ENCODE measurements at regions of chr20 and their contacts with region 1.

Region 1: GRCh38 chr20:18507218-18508021 is at the start of gene SEC23B:
- DNase-seq: peak; percentile 99
- H3K4me3 Mint-ChIP-seq: peak within 1 kb of the TSS; percentile 99
- H3K27ac Mint-ChIP-seq: peak within 1 kb of the TSS; percentile 99
- H3K4me1 Mint-ChIP-seq: peaks cover 33% of the 10 kb centered on the region
- H3K27me3 Mint-ChIP-seq: peaks cover 3% of the 10 kb centered on the region
- total RNA-seq, gene SEC23B: 108 TPM in 2 replicates

Region 2: DNA sequence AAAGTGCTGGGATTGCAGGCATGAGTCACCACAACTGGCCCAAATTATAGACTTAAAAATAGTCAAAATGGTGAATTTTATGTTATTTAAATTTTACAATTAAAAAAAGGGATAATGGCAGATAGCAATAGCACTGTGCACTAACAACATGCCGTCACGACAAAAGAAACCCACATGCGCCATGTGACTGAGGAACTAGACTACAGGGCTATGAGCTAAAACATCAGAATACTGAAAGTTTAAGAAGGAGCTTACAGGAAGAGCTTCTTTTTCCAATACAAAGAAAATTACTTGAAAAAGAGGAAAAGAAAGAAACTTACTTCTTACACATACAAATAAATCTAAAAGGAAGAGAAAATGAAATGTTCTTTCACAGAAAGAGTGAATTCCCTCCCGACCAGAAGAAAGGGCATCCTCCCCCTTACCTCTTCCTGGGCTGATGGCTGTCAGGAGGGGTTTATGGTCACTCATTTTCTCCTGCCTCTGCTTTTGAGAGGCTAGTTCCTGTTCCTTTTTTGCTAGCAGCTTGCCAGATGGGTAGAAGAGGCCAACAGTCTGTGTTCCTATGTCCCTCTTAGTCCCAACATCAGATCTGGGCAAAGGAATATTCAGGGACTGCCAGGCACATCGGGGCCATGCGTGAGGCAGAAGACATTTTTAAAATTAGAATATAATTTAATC is 95.1 kb before region 1 on chr20:
- intact Hi-C with region 1: loop called (anchors 2 kb)
- DNase-seq: no peak
- H3K4me3 Mint-ChIP-seq: no peak overlapping the region
- H3K27ac Mint-ChIP-seq: no peak overlapping the region
- H3K4me1 Mint-ChIP-seq: peaks cover 5% of the 10 kb centered on the region
- H3K27me3 Mint-ChIP-seq: no peaks in the 10 kb centered on the region

Region 3: DNA sequence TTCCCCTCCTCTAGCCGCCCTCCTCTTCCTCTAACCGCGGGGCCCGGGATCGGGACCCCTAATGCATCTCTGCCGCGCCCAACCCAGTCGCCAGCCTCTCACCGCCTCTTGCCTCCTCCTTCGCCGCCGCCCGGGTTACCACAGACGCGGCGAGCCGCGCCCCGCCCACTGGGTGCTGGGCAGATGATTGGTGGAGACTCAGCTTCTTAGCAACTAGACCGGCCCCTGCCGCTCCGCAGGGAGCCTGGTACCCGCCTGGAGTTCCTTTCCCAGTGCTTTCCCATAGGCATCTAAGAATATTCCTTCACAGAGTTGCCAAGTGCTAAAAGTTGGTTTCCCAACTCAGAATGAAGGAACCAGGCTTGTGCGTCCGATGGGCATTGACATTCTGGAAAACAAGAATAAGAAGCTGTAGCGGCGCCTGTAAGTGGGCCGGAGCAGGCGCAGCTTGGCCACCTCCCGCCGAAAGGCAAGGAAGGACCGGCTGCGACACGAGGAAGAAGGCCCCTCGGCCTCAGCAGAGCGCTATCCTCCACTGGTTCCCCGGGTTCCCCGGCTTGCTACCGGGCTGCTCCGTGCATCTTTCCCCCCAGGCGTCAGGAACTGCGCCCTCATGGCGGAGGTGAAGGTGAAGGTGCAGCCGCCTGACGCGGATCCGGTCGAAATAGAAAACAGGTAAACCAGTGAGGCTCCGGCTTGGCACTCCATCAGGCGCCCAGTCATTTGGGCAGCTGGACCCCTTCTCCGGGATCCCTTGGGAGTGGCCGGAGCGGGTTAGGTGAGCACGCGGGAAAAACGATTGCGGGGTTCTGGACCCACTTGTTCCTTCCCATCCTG is 40.3 kb before region 1 on chr20 and contains the starts of genes DZANK1 and POLR3F:
- intact Hi-C with region 1: loop called (anchors 1 kb)
- DNase-seq: peak; percentile 98
- H3K4me3 Mint-ChIP-seq: peak within 1 kb of the TSS; percentile 92
- H3K27ac Mint-ChIP-seq: peak within 1 kb of the TSS; percentile 89
- H3K4me1 Mint-ChIP-seq: peaks cover 20% of the 10 kb centered on the region
- H3K27me3 Mint-ChIP-seq: no peaks in the 10 kb centered on the region
- total RNA-seq, gene DZANK1: 1.8 and 1.9 TPM in 2 replicates
- total RNA-seq, gene POLR3F: 15.0 and 15.3 TPM in 2 replicates

Region 4: DNA sequence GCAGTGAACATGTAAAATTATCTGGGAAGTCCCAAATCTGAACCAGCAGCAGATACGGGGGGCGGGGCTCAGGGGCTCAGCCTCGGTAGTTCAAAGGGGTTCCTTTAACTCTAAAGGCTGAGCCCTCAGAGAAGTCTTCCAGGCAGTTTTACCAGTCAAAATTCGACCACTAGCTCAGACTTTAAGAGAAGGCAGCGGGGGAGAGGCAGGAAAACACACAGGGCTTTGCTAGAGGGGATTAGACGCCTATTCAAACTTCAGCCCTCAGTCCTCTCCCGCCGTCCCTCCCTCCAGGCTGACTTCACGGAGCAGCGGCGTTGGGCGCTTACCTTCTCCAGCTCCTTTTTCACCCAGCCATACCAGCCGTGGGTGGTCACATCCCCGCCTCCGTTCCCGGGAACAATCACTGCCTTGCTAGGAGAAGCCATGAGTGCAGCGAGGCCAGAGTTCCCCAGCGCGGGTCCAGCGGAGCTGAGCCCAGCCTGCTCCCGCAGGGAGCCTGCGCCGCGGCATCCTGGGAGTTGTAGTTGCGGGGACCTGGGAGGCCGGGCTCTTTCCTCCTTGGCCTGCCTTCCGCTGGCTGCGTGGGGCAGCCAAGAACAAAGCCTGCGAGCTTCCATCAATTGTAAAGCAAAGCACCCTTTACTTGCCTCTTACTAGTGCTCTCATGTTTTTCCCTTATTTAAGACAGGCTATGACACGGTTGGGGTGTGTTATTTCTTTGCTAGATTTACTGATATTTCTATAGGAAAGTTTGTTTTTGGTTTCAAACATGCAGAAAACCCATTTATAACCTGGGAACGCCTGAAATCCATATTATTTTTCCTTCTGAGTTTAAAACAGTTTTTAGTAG is 10.5 kb before region 1 on chr20 and contains the start of gene RBBP9:
- intact Hi-C with region 1: loop called (anchors 1 kb)
- DNase-seq: peak; percentile 93
- H3K4me3 Mint-ChIP-seq: peak within 1 kb of the TSS; percentile 99
- H3K27ac Mint-ChIP-seq: peak within 1 kb of the TSS; percentile 93
- H3K4me1 Mint-ChIP-seq: peaks cover 20% of the 10 kb centered on the region
- H3K27me3 Mint-ChIP-seq: no peaks in the 10 kb centered on the region
- total RNA-seq, gene RBBP9: 21.1 and 24.3 TPM in 2 replicates

Region 5: GRCh38 chr20:18566892-18567742 is 59.7 kb after region 1 on chr20 and contains the start of gene SMIM26:
- intact Hi-C with region 1: loop called (anchors 1 kb)
- DNase-seq: peak; percentile 98
- H3K4me3 Mint-ChIP-seq: peak within 1 kb of the TSS; percentile 97
- H3K27ac Mint-ChIP-seq: peak within 1 kb of the TSS; percentile 96
- H3K4me1 Mint-ChIP-seq: peaks cover 14% of the 10 kb centered on the region
- H3K27me3 Mint-ChIP-seq: no peaks in the 10 kb centered on the region
- total RNA-seq, gene SMIM26: 55.8 and 60.2 TPM in 2 replicates

Region 6: DNA sequence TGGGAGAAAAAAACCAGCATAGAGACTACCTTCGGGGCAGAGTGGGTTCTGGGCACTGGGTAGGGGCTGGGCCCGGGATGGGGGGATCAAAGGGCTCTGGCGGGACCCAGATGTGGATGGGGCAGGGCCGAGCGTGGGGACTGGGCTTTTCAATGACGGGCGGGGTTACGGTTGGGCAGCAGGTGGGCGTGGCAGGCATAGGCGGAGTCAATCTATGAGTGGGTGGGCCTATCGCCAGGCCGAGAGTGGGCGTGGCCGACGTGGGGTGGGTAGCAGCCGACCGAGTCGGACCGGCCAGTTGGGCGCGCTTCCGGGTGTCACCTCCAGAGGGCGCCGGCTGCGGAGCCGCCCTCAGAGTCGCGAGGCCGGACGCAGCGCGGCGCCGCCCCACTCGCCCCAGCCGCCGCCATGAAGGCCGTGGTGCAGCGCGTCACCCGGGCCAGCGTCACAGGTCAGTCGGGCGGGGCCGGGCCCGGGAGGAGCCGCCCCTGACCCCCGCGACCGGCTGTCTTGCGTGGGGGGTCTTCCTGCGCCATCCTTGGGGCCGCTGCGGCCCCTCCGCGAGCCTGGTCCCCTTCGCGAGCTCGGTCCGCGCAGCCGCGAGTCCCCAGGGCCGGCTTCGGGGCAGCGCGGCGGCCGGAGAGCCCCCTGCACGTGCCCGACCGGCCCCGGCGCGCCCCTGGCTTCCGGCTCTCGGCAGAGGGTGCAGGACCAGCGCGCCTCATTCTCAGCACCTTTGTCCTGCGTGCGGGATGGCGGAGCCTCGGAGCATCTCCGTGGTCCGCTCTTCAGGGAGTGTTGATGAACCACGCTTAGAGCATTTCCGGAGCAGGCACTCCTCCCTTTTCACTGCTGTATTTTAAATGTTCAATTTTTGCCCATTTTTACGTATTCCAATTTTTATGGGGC is 80.5 kb after region 1 on chr20 and contains the start of gene DTD1:
- intact Hi-C with region 1: loop called (anchors 1 kb)
- DNase-seq: peak; percentile 96
- H3K4me3 Mint-ChIP-seq: peak within 1 kb of the TSS; percentile 94
- H3K27ac Mint-ChIP-seq: peak within 1 kb of the TSS; percentile 88
- H3K4me1 Mint-ChIP-seq: peaks cover 25% of the 10 kb centered on the region
- H3K27me3 Mint-ChIP-seq: peaks cover 7% of the 10 kb centered on the region
- total RNA-seq, gene DTD1: 49.2 and 49.9 TPM in 2 replicates

Region 7: GRCh38 chr20:18793625-18794427 is 286.4 kb after region 1 on chr20:
- intact Hi-C with region 1: loop called (anchors 5 kb)
- DNase-seq: peak; percentile 95
- H3K4me3 Mint-ChIP-seq: peak overlapping the region; percentile 93
- H3K27ac Mint-ChIP-seq: peak overlapping the region; percentile 92
- H3K4me1 Mint-ChIP-seq: peaks cover 6% of the 10 kb centered on the region
- H3K27me3 Mint-ChIP-seq: peaks cover 6% of the 10 kb centered on the region

Measured in activated CD4-positive, alpha-beta T cell treated with anti-CD3 and anti-CD28 coated beads, Interleukin-2, amount 10 ng/mL, durations not matched to agents 24 days and 14 days (primary cell).